PC-9 (cell line): ENCODE measurements at regions of chr19 and their contacts with region 1.

Region 1: DNA sequence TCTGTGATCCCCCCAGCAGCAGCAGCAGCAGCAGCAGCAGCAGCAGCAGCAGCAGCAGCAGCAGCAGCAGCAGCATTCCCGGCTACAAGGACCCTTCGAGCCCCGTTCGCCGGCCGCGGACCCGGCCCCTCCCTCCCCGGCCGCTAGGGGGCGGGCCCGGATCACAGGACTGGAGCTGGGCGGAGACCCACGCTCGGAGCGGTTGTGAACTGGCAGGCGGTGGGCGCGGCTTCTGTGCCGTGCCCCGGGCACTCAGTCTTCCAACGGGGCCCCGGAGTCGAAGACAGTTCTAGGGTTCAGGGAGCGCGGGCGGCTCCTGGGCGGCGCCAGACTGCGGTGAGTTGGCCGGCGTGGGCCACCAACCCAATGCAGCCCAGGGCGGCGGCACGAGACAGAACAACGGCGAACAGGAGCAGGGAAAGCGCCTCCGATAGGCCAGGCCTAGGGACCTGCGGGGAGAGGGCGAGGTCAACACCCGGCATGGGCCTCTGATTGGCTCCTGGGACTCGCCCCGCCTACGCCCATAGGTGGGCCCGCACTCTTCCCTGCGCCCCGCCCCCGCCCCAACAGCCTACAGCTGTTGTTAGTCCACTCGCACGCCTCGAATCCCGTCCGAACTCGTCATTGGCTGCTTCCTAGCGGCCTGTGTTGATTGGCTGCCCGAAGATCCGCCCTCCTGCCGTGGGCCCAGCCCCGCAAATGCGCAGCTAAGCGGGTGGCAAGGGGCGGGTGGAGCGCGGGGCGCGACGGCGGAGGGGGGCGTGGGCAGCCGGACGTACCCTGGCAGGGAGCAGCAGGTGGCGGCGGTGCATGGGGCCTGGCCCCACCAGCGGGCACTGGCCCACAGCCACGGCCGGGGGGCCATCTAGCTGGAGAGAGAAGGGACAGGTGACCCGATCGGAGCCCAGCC is 1.4 kb upstream of the SIX5 start:
- DNase-seq: peak; percentile 79 to 92
- H3K4me3 ChIP-seq: peak overlapping the region; percentile 58
- H3K27ac ChIP-seq: 0 out of 2 replicates have a peak overlapping the region, but pooled peaks have one; percentile 6
- H3K4me1 ChIP-seq: peaks cover 17% of the 10 kb centered on the region
- H3K27me3 ChIP-seq: no peaks in the 10 kb centered on the region
- CTCF ChIP-seq: peak; percentile 99

Region 2: GRCh38 chr19:45423589-45424190 is 346.8 kb before region 1 on chr19 and contains the start of gene ERCC1:
- CTCF ChIA-PET with region 1: no interaction called
- POLR2A ChIA-PET with region 1: no interaction called
- intact Hi-C with region 1: loop called (anchors 5 kb)
- DNase-seq: peak; percentile 97 to 99
- H3K4me3 ChIP-seq: peak within 1 kb of the TSS; percentile 77
- H3K27ac ChIP-seq: peak within 1 kb of the TSS; percentile 99
- H3K4me1 ChIP-seq: peaks cover 39% of the 10 kb centered on the region
- H3K27me3 ChIP-seq: no peaks in the 10 kb centered on the region
- CTCF ChIP-seq: no peak
- total RNA-seq, gene ERCC1: 102 and 138 TPM in 2 replicates

Region 3: DNA sequence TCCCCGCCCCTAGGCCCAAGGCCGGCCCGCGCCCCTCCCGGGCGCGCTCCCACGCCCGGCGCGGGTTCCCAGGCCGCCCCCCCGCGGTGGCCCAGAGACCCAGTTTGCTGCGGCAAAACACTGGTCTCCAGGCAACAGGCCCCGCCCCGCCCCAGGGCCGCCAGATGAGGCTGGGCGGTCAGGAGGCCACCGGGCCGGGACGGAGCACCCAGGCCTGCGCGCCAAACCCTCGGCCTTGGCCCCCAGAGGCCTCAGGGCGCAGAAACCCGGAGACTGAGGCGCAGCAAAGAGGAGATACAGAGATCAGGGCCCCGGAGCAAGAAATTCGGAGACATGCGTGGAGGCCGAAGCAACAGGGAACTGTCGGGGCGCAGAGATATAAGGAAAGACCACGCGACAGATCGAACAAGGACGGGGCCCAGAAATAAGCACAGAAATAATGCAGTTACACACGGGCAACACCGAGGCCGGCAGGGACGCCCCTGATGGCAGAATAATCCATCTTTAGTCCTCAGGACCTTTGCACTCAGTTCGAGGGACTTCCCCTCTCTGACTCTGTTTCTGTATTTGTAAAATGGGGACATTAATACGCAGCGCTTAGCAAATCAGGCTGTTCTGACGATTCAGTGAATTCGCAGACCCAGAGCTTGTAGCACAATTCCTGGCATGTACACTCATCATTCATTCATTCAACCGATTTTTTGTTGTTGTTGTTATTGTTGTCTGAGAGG is 326.0 kb before region 1 on chr19:
- CTCF ChIA-PET with region 1: no interaction called
- POLR2A ChIA-PET with region 1: no interaction called
- intact Hi-C with region 1: no loop called
- DNase-seq: peak; percentile 76 to 96
- H3K4me3 ChIP-seq: peak overlapping the region; percentile 45
- H3K27ac ChIP-seq: no peak overlapping the region
- H3K4me1 ChIP-seq: peaks cover 41% of the 10 kb centered on the region
- H3K27me3 ChIP-seq: no peaks in the 10 kb centered on the region
- CTCF ChIP-seq: no peak

Region 4: GRCh38 chr19:45670670-45671453 is 99.6 kb before region 1 on chr19:
- CTCF ChIA-PET with region 1: no interaction called
- POLR2A ChIA-PET with region 1: interaction called, 11 read pairs
- intact Hi-C with region 1: no loop called
- DNase-seq: peak; percentile 81 to 96
- H3K4me3 ChIP-seq: peak overlapping the region; percentile 51; the same call in 1 of the 2 replicates
- H3K27ac ChIP-seq: no peak overlapping the region
- H3K4me1 ChIP-seq: peaks cover 35% of the 10 kb centered on the region
- H3K27me3 ChIP-seq: no peaks in the 10 kb centered on the region
- CTCF ChIP-seq: no peak

Region 5: GRCh38 chr19:45717166-45717982 is 53.1 kb before region 1 on chr19:
- CTCF ChIA-PET with region 1: interaction called, 7 read pairs
- POLR2A ChIA-PET with region 1: interaction called, 39 read pairs
- intact Hi-C with region 1: loop called (anchors 1 kb)
- DNase-seq: peak; percentile 99
- H3K4me3 ChIP-seq: peak overlapping the region; percentile 87
- H3K27ac ChIP-seq: peak overlapping the region; percentile 75
- H3K4me1 ChIP-seq: peaks cover 35% of the 10 kb centered on the region
- H3K27me3 ChIP-seq: no peaks in the 10 kb centered on the region
- CTCF ChIP-seq: no peak; the same call in 1 of the 2 replicates

Region 6: DNA sequence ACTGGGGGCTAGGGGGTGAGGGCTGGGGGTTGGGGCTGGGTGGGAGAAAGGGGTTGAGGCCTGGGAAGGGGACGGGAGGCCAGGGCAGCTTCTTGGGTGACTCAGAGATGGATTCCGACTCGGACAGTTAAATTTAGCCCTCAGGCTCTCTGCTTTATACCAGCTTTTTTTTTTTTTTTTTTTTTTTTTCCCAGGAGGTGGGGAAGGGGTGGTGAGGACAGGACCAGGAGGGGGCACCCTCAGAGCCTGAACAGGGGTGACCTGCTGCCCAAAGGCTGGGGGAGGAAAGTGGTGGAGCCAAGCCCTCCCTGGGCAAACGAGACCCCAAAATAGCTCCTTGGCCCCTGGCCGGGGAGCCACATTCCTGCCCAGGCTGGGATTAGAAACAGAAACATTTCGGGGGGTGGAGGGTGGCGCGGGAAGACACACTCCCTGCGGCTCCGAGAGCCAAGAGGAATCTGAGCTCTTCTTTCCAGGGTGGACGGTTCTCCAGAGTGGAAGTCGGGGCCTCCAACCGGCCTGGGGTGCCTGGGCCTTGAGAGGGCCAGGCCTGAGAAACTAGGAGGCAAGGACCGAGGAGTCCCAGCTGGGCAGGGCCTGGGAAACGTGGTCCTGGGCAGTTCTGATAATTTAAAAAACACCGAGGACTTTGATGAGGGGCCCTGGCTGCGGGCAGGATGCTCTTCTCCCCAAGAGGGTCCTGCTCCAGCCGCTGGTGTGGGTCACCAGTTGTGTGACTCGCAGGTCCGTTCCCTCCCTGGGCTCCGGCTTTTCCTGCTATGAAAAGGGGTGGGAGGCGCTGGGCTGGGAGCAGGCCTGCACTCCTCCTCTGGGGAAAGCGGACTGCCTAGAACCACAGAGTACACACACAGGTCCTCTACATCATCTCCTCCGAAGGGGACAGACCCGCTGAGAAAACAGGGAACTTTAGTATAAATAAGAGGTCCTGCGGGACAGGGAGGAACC is 12.7 kb after region 1 on chr19:
- CTCF ChIA-PET with region 1: interaction called, 5 read pairs
- POLR2A ChIA-PET with region 1: interaction called, 58 read pairs
- intact Hi-C with region 1: loop called (anchors 1 kb)
- DNase-seq: peak; percentile 73 to 77
- H3K4me3 ChIP-seq: peak overlapping the region; percentile 51; the same call in 1 of the 2 replicates
- H3K27ac ChIP-seq: peak overlapping the region; percentile 81
- H3K4me1 ChIP-seq: peaks cover 55% of the 10 kb centered on the region
- H3K27me3 ChIP-seq: no peaks in the 10 kb centered on the region
- CTCF ChIP-seq: no peak; the same call in 1 of the 2 replicates

Region 7: GRCh38 chr19:45817010-45817724 is 46.7 kb after region 1 on chr19:
- CTCF ChIA-PET with region 1: interaction called, 10 read pairs
- POLR2A ChIA-PET with region 1: interaction called, 3 read pairs
- intact Hi-C with region 1: loop called (anchors 1 kb)
- DNase-seq: peak; percentile 86 to 95
- H3K4me3 ChIP-seq: no peak overlapping the region
- H3K27ac ChIP-seq: no peak overlapping the region
- H3K4me1 ChIP-seq: no peaks in the 10 kb centered on the region
- H3K27me3 ChIP-seq: no peaks in the 10 kb centered on the region
- CTCF ChIP-seq: peak; percentile 99

Region 8: DNA sequence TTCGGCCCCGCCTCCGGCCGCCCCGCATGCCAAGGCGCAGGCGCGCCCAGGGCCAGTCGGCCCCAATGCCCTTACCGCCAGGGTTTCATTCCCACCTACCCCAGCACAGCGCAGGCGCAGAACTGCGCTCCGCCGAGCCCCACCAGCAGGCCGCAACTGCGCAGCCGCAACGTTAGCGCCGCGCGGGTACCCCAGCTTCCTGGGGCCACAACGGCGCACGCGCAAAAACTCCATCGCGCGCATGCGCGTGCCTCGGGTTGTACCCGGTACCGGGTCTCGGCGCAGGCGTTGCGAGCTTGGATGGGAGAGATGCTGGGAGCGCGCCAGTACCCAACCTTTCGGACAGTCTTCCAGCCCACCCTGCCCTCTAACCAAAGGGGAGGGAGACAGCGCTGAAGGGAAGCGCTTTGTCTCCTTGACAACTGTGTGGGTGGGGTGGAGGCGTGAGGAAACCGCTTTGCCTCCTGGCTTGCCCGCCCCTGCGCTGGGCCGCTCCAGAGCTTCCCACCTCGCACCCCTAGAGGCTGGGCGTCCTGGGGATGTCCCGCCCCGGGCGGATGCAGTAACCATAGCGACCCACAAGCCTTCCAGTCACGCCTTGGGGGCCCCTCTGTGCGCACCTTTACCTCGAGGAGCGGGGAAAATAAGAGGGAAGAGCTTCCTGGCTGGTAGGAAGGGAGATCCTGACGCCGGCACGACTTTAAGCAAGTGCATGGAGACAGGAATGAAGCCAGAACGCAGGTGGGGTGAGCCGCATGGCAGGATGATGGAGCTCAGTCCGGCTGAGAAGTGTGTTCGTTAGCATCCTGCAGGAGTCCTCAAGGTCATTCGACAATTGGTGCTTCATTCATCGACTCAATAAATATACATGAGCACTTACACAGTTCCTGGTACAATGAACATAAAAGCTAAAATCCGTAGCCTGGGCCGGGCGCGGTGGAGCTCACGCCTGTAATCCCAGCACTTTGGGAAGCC is 132.5 kb after region 1 on chr19:
- CTCF ChIA-PET with region 1: no interaction called
- POLR2A ChIA-PET with region 1: no interaction called
- intact Hi-C with region 1: no loop called
- DNase-seq: peak; percentile 94 to 99
- H3K4me3 ChIP-seq: peak overlapping the region; percentile 95
- H3K27ac ChIP-seq: peak overlapping the region; percentile 7
- H3K4me1 ChIP-seq: peaks cover 32% of the 10 kb centered on the region
- H3K27me3 ChIP-seq: no peaks in the 10 kb centered on the region
- CTCF ChIP-seq: no peak